ENCODE measurements at regions of chr5 and their contacts with region 1.

Region 1: DNA sequence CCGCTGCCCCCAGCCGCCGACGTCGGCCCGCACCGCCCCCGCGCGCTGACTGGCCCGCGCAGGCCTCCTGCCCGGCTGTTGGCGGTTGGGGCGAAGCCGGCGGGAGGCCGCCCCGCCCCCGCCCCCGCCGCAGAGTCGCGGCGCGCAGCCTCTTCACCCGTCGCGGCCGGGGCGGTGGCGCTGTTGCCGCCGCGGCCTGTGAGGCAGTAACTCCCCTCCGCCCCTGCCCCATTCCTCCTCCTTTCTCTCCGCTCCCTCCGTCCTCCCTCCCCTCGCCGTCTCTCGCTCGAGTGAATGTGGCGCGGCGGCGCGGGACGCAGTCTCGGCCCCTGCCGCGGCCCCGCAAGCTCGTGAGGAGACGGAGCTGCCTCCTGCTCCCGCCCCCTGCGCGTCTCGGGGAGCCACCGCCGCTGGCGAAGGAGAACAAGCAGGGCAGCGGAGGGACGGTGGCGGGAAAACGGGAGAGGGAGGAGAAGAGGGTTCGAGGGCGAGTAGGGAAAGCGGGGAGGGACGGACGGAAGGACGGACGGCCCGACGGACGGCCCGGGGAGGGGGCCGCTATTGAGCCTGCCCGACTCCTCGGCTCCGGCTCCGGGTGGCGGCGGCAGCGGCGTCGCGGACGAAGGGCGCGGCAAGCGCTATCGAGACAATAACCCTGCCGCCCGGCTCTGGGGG is 637 bp upstream of the ERBIN start:
- DNase-seq: peak; percentile 89 to 91 (median 90)
- ATAC-seq: peak; percentile 80
- H3K4me3 ChIP-seq: peak overlapping the region; percentile 90
- H3K27ac ChIP-seq: peak overlapping the region; percentile 97
- H3K4me1 ChIP-seq: peaks cover 2 to 16% of the 10 kb centered on the region in 2 experiments; a peak in 4 of 5 replicates
- H3K27me3 ChIP-seq: no peaks in the 10 kb centered on the region
- CTCF ChIP-seq: peak; percentile 35 to 67 (median 62)
- EP300 ChIP-seq: peak; percentile 30
- POLR2A ChIP-seq: peak; percentile 92
- RAD21 ChIP-seq: peak in 1 of 2 experiments; percentile 55; a peak in 2 of 4 replicates

Region 2: DNA sequence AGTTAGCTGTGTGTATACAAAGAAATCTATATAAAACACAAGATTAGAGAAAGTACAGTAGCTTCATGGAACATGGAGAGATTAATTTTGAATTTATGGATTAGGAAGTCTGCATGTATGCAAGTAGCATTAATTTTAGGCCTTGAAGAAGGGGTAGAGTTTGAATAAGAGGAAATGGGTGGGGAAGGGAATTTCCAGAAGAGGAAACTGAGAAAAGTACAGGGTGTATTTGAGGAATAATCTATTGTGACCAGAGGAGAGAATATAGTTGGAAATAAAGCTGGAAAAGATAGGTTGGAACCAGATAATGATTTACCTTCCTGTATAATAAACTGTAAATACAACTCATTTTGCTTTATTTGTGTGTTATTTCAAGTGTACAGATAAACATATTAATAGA is 1103.4 kb before region 1 on chr5:
- CTCF ChIA-PET with region 1: no interaction called
- POLR2A ChIA-PET with region 1: no interaction called
- in situ Hi-C with region 1: no loop called
- intact Hi-C with region 1: no loop called
- DNase-seq: no peak
- ATAC-seq: no peak
- H3K4me3 ChIP-seq: no peak overlapping the region
- H3K27ac ChIP-seq: no peak overlapping the region
- H3K4me1 ChIP-seq: no peaks in the 10 kb centered on the region
- H3K27me3 ChIP-seq: no peaks in the 10 kb centered on the region
- CTCF ChIP-seq: no peak
- EP300 ChIP-seq: no peak
- POLR2A ChIP-seq: no peak
- RAD21 ChIP-seq: no peak

Region 3: GRCh38 chr5:65624571-65625555 is 300.9 kb before region 1 on chr5 and contains the starts of genes SHLD3 and TRAPPC13:
- CTCF ChIA-PET with region 1: no interaction called
- POLR2A ChIA-PET with region 1: no interaction called
- in situ Hi-C with region 1: no loop called
- intact Hi-C with region 1: loop called (anchors 10 kb)
- DNase-seq: peak; percentile 74 to 89 (median 78)
- ATAC-seq: peak; percentile 82
- H3K4me3 ChIP-seq: peak within 1 kb of the TSS; percentile 59
- H3K27ac ChIP-seq: peak within 1 kb of the TSS; percentile 84
- H3K4me1 ChIP-seq: peaks cover 6 to 14% of the 10 kb centered on the region in 2 experiments
- H3K27me3 ChIP-seq: no peaks in the 10 kb centered on the region
- CTCF ChIP-seq: peak in 1 of 3 experiments; percentile 3; a peak in 1 of 6 replicates
- EP300 ChIP-seq: no peak; the same call in 1 of the 2 replicates
- POLR2A ChIP-seq: peak; percentile 74
- RAD21 ChIP-seq: no peak
- polyA plus RNA-seq, gene SHLD3: 12.1 to 14.5 TPM
- polyA plus RNA-seq, gene TRAPPC13: 30.7 to 32.9 TPM

Region 4: DNA sequence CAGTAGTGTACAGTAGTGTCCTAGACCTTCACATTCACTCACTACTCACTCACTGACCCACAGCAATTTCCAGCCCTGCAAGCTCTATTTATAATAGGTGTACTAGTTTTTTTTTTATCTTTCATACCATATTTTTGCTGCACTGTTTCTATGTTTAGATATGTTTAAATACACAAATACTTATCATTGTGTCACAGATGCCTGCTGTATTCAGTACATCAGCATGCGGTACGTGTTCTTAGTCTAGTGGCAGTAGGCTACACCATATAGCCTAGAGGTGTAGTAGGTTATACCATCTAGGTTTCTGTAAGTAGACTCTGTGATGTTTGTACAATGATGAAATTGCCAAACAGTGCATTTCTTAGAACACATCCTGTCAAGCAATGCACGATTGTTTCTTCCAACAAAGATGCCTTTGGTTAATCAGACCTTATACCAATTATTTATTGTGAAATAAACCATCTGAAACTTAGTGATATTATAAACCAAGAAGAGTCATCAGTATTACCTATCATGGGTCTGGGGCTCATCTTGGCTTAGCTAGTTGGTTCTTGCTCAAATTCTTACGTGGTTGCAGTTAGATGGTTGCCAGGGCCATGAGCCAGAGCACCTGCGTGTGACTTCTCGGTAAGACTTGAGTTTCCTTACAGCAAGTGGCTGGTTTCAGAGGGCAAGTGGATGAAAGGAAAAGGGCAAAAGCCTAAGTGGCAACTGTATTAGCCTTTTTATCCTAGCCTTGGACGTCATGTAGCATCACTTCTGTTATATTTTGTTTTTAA is 41.7 kb after region 1 on chr5:
- CTCF ChIA-PET with region 1: no interaction called
- POLR2A ChIA-PET with region 1: interaction called, 6 read pairs
- in situ Hi-C with region 1: no loop called
- intact Hi-C with region 1: loop called (anchors 1 kb)
- DNase-seq: peak; percentile 53 to 83 (median 64)
- ATAC-seq: peak; percentile 84
- H3K4me3 ChIP-seq: no peak overlapping the region
- H3K27ac ChIP-seq: peak overlapping the region; percentile 73
- H3K4me1 ChIP-seq: peaks cover 21 to 50% of the 10 kb centered on the region in 2 experiments
- H3K27me3 ChIP-seq: no peaks in the 10 kb centered on the region
- CTCF ChIP-seq: no peak
- EP300 ChIP-seq: peak; percentile 84; the same call in 1 of the 2 replicates
- POLR2A ChIP-seq: no peak
- RAD21 ChIP-seq: no peak

Region 5: GRCh38 chr5:66039296-66039695 is 113.6 kb after region 1 on chr5:
- CTCF ChIA-PET with region 1: no interaction called
- POLR2A ChIA-PET with region 1: no interaction called
- in situ Hi-C with region 1: loop called (anchors 5 kb)
- intact Hi-C with region 1: no loop called
- DNase-seq: no peak
- ATAC-seq: no peak
- H3K4me3 ChIP-seq: no peak overlapping the region
- H3K27ac ChIP-seq: no peak overlapping the region
- H3K4me1 ChIP-seq: no peaks in the 10 kb centered on the region
- H3K27me3 ChIP-seq: no peaks in the 10 kb centered on the region
- CTCF ChIP-seq: no peak
- EP300 ChIP-seq: no peak
- POLR2A ChIP-seq: no peak
- RAD21 ChIP-seq: no peak

Region 6: GRCh38 chr5:66144074-66144833 is 218.5 kb after region 1 on chr5 and contains the start of gene SREK1:
- CTCF ChIA-PET with region 1: no interaction called
- POLR2A ChIA-PET with region 1: no interaction called
- in situ Hi-C with region 1: no loop called
- intact Hi-C with region 1: loop called (anchors 2 kb)
- DNase-seq: peak; percentile 93 to 97 (median 94)
- ATAC-seq: peak; percentile 92
- H3K4me3 ChIP-seq: peak within 1 kb of the TSS; percentile 70
- H3K27ac ChIP-seq: peak within 1 kb of the TSS; percentile 96
- H3K4me1 ChIP-seq: peaks cover 0 to 17% of the 10 kb centered on the region in 2 experiments; a peak in 3 of 5 replicates
- H3K27me3 ChIP-seq: no peaks in the 10 kb centered on the region
- CTCF ChIP-seq: no peak
- EP300 ChIP-seq: no peak; the same call in none of the 2 replicates
- POLR2A ChIP-seq: peak; percentile 97
- RAD21 ChIP-seq: no peak
- polyA plus RNA-seq, gene SREK1: 40.8 to 47.0 TPM

Region 7: DNA sequence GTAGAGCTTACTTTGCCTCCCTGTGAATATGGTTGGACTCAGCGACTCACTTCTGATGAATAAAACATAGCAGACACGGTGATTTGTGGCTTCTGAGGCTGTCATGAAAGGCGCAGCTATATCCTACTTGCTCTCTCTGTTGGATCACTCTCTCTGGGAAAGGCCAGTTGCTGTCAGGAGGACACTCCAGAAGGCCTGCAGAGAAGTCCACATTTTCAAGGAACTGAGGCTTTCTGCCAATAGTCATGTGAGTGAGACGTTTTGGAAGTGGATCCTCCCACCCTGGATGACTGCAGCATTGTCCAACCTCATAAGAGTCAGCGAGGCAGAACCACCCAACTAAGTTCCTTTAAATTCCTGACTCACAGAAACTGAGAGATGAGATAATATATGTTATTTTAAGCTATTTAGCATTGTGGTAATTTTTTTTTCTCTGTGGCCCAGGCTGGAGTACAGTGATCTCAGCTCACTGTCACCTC is 514.5 kb after region 1 on chr5:
- CTCF ChIA-PET with region 1: no interaction called
- POLR2A ChIA-PET with region 1: no interaction called
- in situ Hi-C with region 1: no loop called
- intact Hi-C with region 1: no loop called
- DNase-seq: no peak
- ATAC-seq: no peak
- H3K4me3 ChIP-seq: no peak overlapping the region
- H3K27ac ChIP-seq: no peak overlapping the region
- H3K4me1 ChIP-seq: no peaks in the 10 kb centered on the region
- H3K27me3 ChIP-seq: no peaks in the 10 kb centered on the region
- CTCF ChIP-seq: no peak
- EP300 ChIP-seq: no peak
- POLR2A ChIP-seq: no peak
- RAD21 ChIP-seq: no peak

Measured in K562 (cell line).